ENCODE measurements at regions of chr22 and their contacts with region 1.

Region 1: DNA sequence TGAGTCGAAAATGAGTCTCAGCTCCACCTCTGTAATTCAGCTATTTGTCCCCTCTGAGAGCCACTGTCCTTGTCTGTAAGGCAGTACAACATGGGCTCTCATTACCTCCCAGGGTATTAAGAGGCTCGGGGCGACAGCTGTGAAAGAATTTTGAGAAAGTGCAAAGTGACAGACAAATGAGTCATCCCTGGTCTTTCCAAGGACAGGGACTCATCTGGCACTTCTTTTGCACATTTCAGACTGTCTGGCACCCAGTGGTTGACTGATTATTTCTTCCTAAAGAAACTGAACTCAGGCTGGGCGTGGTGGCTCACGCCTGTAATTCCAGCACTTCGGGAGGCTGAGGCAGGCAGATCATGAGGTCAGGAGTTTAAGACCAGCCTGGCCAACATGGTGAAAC is 62.1 kb upstream of the ARFGAP3 start:
- DNase-seq: peak; percentile 57
- H3K4me3 Mint-ChIP-seq: no peak overlapping the region
- H3K27ac Mint-ChIP-seq: peak overlapping the region; percentile 63
- H3K4me1 Mint-ChIP-seq: peaks cover 23% of the 10 kb centered on the region
- H3K27me3 Mint-ChIP-seq: no peaks in the 10 kb centered on the region
- CTCF ChIP-seq: no peak

Region 2: GRCh38 chr22:42906605-42907348 is 12.4 kb before region 1 on chr22:
- CTCF ChIA-PET with region 1: interaction called, 26 read pairs
- POLR2A ChIA-PET with region 1: interaction called, 25 read pairs
- intact Hi-C with region 1: no loop called
- DNase-seq: no peak
- H3K4me3 Mint-ChIP-seq: no peak overlapping the region
- H3K27ac Mint-ChIP-seq: no peak overlapping the region
- H3K4me1 Mint-ChIP-seq: peaks cover 39% of the 10 kb centered on the region
- H3K27me3 Mint-ChIP-seq: no peaks in the 10 kb centered on the region
- CTCF ChIP-seq: no peak

Region 3: GRCh38 chr22:42933481-42934091 is 14.4 kb after region 1 on chr22:
- CTCF ChIA-PET with region 1: interaction called, 4 read pairs
- POLR2A ChIA-PET with region 1: interaction called, 52 read pairs
- intact Hi-C with region 1: no loop called
- DNase-seq: peak; percentile 78
- H3K4me3 Mint-ChIP-seq: peak overlapping the region; percentile 61
- H3K27ac Mint-ChIP-seq: peak overlapping the region; percentile 99
- H3K4me1 Mint-ChIP-seq: peaks cover 80% of the 10 kb centered on the region
- H3K27me3 Mint-ChIP-seq: no peaks in the 10 kb centered on the region
- CTCF ChIP-seq: no peak

Region 4: DNA sequence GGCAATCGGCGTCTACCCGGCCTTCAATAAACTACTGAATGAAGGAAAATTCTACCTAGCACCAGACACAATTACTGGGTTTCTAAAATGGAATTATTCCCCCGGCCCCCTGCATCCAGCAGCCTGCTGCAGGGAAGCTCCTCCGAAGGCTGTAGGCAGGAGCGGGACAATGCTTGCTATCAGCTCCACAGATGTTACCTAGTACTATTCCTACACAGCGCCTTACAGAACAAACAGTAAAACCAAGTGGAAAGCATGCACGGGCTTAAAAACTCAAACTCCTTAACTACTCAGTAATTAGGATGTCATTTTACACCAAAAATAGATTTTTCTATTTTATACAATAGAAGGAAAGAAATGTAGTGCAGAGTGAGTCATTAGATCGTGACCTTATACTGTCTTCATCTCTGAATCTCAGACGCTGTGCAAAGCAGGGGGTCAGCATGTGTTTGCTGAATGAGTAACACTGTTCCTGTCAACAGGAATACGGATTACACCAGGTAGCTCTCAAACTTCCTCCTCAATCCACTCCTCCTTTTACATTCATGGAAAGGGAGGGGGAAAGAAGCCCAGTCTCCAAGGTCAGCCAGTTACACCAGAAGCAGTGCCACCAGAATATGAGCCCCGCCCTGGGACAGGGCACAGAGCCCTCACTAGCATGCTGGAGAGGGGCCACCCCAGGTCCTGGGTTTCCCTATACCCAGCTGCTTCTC is 20.9 kb after region 1 on chr22:
- CTCF ChIA-PET with region 1: interaction called, 4 read pairs
- POLR2A ChIA-PET with region 1: interaction called, 52 read pairs
- intact Hi-C with region 1: no loop called
- DNase-seq: peak; percentile 89
- H3K4me3 Mint-ChIP-seq: no peak overlapping the region
- H3K27ac Mint-ChIP-seq: peak overlapping the region; percentile 88
- H3K4me1 Mint-ChIP-seq: peaks cover 51% of the 10 kb centered on the region
- H3K27me3 Mint-ChIP-seq: no peaks in the 10 kb centered on the region
- CTCF ChIP-seq: no peak

Region 5: DNA sequence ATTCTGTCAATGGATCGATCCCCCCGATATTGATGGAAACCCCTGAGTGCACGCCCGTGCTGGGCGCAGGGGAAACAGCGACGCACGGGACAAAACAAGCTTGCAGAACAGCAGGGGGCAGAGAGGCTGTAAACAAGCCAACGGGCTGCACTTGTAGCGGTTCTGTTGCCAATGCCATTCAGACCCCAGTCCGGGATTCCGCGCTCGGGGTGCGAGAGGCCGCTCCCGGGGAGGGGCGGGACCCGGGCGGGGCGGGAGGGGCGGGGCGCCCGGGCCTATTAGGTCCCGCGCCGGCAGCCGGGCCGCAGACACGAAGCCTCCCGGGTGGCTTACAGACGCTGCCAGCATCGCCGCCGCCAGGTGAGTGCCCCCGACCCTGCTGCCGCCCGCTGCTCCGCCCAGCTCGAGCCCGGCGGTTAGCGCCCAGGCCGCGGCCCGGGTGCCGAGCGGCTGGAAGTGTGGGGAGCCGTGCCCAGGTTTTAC is 191.3 kb after region 1 on chr22 and contains the start of gene BIK:
- CTCF ChIA-PET with region 1: no interaction called
- POLR2A ChIA-PET with region 1: no interaction called
- intact Hi-C with region 1: no loop called
- DNase-seq: peak; percentile 59
- H3K4me3 Mint-ChIP-seq: peak within 1 kb of the TSS; percentile 69
- H3K27ac Mint-ChIP-seq: no peak within 1 kb of the TSS
- H3K4me1 Mint-ChIP-seq: no peaks in the 10 kb centered on the region
- H3K27me3 Mint-ChIP-seq: no peaks in the 10 kb centered on the region
- CTCF ChIP-seq: no peak
- total RNA-seq, gene BIK: 7.3 and 10.0 TPM in 2 replicates

Region 6: DNA sequence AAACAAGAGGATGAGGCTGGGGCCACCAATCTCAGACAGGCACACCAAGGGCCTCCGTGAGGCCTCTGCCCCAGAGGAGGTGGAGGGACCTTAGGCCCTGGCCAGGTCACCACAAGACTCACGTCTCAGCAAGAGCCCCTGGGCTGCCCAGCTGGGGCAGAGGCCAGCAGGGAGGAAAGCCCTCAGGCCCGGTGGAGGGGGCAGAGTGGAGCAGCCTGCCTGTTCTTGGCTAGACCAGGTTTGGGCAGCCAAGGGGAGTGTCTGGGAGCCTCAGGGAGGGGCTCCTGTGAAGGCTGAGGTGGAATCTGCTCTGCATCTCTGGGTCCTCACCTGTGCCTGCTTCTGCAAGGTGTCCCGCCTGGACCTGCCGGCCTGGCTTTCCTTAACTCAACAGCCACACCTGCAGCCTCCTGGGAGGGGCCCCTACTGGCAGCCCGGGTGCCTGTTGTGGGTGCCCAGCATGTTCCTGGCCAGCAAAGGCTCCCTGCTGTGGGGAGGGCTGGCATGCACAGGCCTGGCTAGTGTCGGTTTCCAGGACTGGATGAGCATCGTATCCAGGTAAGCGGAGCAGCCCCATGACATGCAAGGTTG is 255.8 kb after region 1 on chr22:
- CTCF ChIA-PET with region 1: no interaction called
- POLR2A ChIA-PET with region 1: no interaction called
- intact Hi-C with region 1: no loop called
- DNase-seq: peak; percentile 38
- H3K4me3 Mint-ChIP-seq: no peak overlapping the region
- H3K27ac Mint-ChIP-seq: no peak overlapping the region
- H3K4me1 Mint-ChIP-seq: no peaks in the 10 kb centered on the region
- H3K27me3 Mint-ChIP-seq: no peaks in the 10 kb centered on the region
- CTCF ChIP-seq: no peak